Mammary epithelial cell (primary cell): ENCODE measurements at regions of chr9 and their contacts with region 1.

Region 1: GRCh38 chr9:130263601-130264413 is 1.8 kb upstream of the HMCN2 start:
- DNase-seq: no peak
- H3K4me3 ChIP-seq: no peak overlapping the region
- H3K27ac ChIP-seq: no peak overlapping the region
- H3K4me1 ChIP-seq: peaks cover 11% of the 10 kb centered on the region
- H3K27me3 ChIP-seq: peaks cover 15% of the 10 kb centered on the region
- CTCF ChIP-seq: peak in 1 of 2 donors; percentile 26

Region 2: GRCh38 chr9:129567842-129568559 is 695.8 kb before region 1 on chr9:
- CTCF ChIA-PET with region 1: no interaction called
- dilution Hi-C with region 1: no loop called
- in situ Hi-C with region 1: no loop called
- intact Hi-C with region 1: no loop called
- DNase-seq: no peak
- H3K4me3 ChIP-seq: peak overlapping the region; percentile 15 to 42 (median 39)
- H3K27ac ChIP-seq: no peak overlapping the region
- H3K4me1 ChIP-seq: peaks cover 30% of the 10 kb centered on the region
- H3K27me3 ChIP-seq: no peaks in the 10 kb centered on the region
- CTCF ChIP-seq: no peak

Region 3: DNA sequence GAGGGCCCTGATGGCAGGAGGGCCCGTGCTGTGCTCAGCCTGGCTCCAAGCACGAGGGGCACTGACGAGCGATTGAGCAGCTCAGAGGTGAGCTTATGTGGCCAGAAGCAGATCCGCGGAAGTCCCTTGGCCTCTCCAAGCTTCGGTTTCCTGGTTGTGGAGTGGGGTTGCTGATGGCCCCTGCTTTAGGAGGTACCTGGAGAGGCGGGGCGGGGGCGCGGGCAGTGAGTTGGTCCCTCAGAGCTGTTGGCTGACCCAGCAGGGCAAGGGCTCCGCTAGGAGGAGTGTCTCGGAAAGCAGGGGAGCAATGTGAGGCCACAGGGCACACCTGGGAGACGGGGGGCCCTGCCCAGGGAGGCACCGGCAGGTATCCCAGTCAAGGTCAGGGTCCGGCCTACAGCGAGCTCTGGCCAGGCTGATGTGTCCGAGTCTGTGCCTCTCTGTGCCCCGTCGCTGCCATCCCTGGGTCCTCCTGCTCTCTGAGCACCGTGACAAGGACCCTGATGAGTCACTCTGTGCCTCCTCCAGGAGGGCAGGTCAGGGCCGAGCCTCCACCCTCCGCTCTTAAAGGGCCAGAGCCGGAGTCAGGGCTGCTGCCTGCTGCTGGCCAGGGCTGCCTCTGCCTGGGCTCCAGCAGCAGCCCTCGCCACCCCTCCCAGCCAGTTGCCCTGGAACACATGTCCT is 76.8 kb before region 1 on chr9:
- CTCF ChIA-PET with region 1: no interaction called
- dilution Hi-C with region 1: loop called (anchors 5 kb)
- in situ Hi-C with region 1: no loop called
- intact Hi-C with region 1: no loop called
- DNase-seq: peak; percentile 69
- H3K4me3 ChIP-seq: peak overlapping the region; percentile 2 to 50 (median 36)
- H3K27ac ChIP-seq: no peak overlapping the region
- H3K4me1 ChIP-seq: peaks cover 31% of the 10 kb centered on the region
- H3K27me3 ChIP-seq: no peaks in the 10 kb centered on the region
- CTCF ChIP-seq: peak in 1 of 2 donors; percentile 1

Region 4: GRCh38 chr9:130213903-130214761 is 49.7 kb before region 1 on chr9:
- CTCF ChIA-PET with region 1: no interaction called
- dilution Hi-C with region 1: loop called (anchors 5 kb)
- in situ Hi-C with region 1: no loop called
- intact Hi-C with region 1: no loop called
- DNase-seq: no peak
- H3K4me3 ChIP-seq: no peak overlapping the region
- H3K27ac ChIP-seq: no peak overlapping the region
- H3K4me1 ChIP-seq: peaks cover 27% of the 10 kb centered on the region
- H3K27me3 ChIP-seq: no peaks in the 10 kb centered on the region
- CTCF ChIP-seq: no peak

Region 5: GRCh38 chr9:130226112-130226681 is 37.6 kb before region 1 on chr9:
- CTCF ChIA-PET with region 1: no interaction called
- dilution Hi-C with region 1: no loop called
- in situ Hi-C with region 1: no loop called
- intact Hi-C with region 1: no loop called
- DNase-seq: no peak
- H3K4me3 ChIP-seq: no peak overlapping the region
- H3K27ac ChIP-seq: no peak overlapping the region
- H3K4me1 ChIP-seq: no peaks in the 10 kb centered on the region
- H3K27me3 ChIP-seq: no peaks in the 10 kb centered on the region
- CTCF ChIP-seq: no peak

Region 6: DNA sequence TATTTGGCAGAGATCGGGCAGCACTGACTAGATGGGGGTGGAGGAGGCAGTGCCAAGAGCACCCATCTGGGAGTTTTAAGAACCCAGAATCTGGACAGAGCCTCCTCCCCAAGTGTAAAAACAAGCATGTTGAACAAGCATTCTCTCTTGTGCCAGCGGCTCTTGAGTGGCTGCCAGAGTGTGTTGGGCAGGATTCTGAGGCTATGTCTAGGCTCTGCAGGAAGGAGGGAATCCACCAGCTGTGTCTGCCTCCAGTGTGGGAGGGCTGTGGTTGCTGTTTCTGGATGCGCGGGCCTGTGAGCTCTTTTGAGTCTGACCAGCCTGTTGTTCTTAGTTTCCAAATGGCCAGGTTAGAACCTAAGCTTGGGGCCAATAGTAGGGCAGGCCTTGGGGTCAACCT is 41.6 kb after region 1 on chr9:
- CTCF ChIA-PET with region 1: no interaction called
- dilution Hi-C with region 1: loop called (anchors 5 kb)
- in situ Hi-C with region 1: no loop called
- intact Hi-C with region 1: no loop called
- DNase-seq: no peak
- H3K4me3 ChIP-seq: no peak overlapping the region
- H3K27ac ChIP-seq: no peak overlapping the region
- H3K4me1 ChIP-seq: no peaks in the 10 kb centered on the region
- H3K27me3 ChIP-seq: no peaks in the 10 kb centered on the region
- CTCF ChIP-seq: no peak

Region 7: GRCh38 chr9:130352081-130352480 is 88.3 kb after region 1 on chr9:
- CTCF ChIA-PET with region 1: no interaction called
- dilution Hi-C with region 1: loop called (anchors 5 kb)
- in situ Hi-C with region 1: no loop called
- intact Hi-C with region 1: no loop called
- DNase-seq: no peak
- H3K4me3 ChIP-seq: no peak overlapping the region
- H3K27ac ChIP-seq: no peak overlapping the region
- H3K4me1 ChIP-seq: no peaks in the 10 kb centered on the region
- H3K27me3 ChIP-seq: no peaks in the 10 kb centered on the region
- CTCF ChIP-seq: no peak

Region 8: GRCh38 chr9:130414910-130415746 is 151.3 kb after region 1 on chr9:
- CTCF ChIA-PET with region 1: no interaction called
- dilution Hi-C with region 1: no loop called
- in situ Hi-C with region 1: no loop called
- intact Hi-C with region 1: no loop called
- DNase-seq: no peak
- H3K4me3 ChIP-seq: no peak overlapping the region
- H3K27ac ChIP-seq: no peak overlapping the region
- H3K4me1 ChIP-seq: no peaks in the 10 kb centered on the region
- H3K27me3 ChIP-seq: no peaks in the 10 kb centered on the region
- CTCF ChIP-seq: no peak